CD4-positive, alpha-beta T cell (primary cell): ENCODE measurements at regions of chr16 and their contacts with region 1.

Region 1: DNA sequence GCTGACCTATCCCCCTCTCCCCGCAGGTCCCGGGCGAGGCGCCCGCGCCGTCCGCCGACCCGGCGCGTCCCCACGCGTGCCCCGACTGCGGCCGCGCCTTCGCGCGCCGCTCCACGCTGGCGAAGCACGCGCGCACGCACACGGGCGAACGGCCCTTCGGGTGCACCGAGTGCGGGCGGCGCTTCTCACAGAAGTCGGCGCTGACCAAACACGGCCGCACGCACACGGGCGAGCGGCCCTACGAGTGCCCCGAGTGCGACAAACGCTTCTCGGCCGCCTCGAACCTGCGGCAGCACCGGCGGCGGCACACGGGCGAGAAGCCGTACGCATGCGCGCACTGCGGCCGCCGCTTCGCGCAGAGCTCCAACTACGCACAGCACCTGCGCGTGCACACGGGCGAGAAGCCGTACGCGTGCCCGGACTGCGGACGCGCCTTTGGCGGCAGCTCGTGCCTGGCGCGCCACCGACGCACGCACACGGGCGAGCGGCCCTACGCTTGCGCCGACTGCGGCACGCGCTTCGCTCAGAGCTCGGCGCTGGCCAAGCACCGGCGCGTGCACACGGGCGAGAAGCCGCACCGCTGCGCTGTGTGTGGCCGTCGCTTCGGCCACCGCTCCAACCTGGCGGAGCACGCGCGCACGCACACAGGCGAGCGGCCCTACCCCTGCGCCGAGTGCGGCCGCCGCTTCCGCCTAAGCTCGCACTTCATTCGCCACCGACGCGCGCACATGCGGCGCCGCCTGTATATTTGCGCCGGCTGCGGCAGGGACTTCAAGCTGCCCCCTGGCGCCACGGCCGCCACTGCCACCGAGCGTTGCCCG is 10.3 kb downstream of the ZNF771 start:
- DNase-seq: peak; percentile 77 to 98 (median 88)
- ATAC-seq: peak; percentile 85
- H3K4me3 ChIP-seq: peak overlapping the region; percentile 53
- H3K4me3 Mint-ChIP-seq: peak overlapping the region; percentile 80
- H3K27ac ChIP-seq: peak overlapping the region; percentile 73
- H3K27ac Mint-ChIP-seq: peak overlapping the region; percentile 86
- H3K4me1 ChIP-seq: peaks cover 16% of the 10 kb centered on the region
- H3K4me1 Mint-ChIP-seq: peaks cover 21% of the 10 kb centered on the region
- H3K27me3 ChIP-seq: no peaks in the 10 kb centered on the region
- H3K27me3 Mint-ChIP-seq: no peaks in the 10 kb centered on the region
- CTCF ChIP-seq: no peak

Region 2: DNA sequence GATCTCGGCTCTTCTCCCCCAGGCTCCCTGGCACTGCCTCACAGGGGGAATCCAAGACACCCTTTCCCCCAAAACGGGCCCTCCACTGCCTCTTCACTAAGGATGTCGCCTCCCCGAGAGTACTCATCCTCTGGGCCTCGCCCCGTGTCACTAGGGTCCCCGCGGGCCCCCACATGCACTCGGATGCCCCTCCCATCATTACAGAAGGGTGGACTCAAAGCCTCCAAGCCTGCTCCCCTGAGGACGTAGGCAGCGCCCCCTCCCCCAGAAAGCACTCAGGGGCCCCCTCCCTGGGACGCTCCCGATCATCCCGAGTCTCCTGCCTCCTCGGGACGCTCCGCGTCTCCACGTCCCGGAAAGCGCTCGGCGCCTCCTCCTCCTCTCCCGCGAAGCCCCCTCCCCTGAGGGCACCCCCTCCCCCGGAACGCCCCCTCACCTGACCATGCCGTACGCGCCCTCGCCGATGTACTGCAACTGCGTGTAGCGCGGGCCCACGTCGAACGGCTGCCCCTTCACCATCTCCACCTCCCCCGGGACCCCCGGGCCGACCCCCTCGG is 295.1 kb before region 1 on chr16:
- CTCF ChIA-PET with region 1: no interaction called
- POLR2A ChIA-PET with region 1: no interaction called
- intact Hi-C with region 1: loop called in 1 of 2 experiments (anchors 1 kb)
- DNase-seq: peak in 5 of 14 experiments; percentile 4 to 39 (median 26)
- ATAC-seq: peak; percentile 16
- H3K4me3 ChIP-seq: peak overlapping the region; percentile 92
- H3K4me3 Mint-ChIP-seq: peak overlapping the region; percentile 91
- H3K27ac ChIP-seq: peak overlapping the region; percentile 37 to 59
- H3K27ac Mint-ChIP-seq: peak overlapping the region; percentile 81
- H3K4me1 ChIP-seq: peaks cover 33% of the 10 kb centered on the region
- H3K4me1 Mint-ChIP-seq: peaks cover 28% of the 10 kb centered on the region
- H3K27me3 ChIP-seq: no peaks in the 10 kb centered on the region
- H3K27me3 Mint-ChIP-seq: no peaks in the 10 kb centered on the region
- CTCF ChIP-seq: no peak

Region 3: GRCh38 chr16:30370444-30371247 is 47.1 kb before region 1 on chr16 and contains the start of gene TBC1D10B:
- CTCF ChIA-PET with region 1: interaction called, 6 read pairs
- POLR2A ChIA-PET with region 1: interaction called, 31 read pairs
- intact Hi-C with region 1: no loop called
- DNase-seq: peak; percentile 97 to 100 (median 99)
- ATAC-seq: peak; percentile 84
- H3K4me3 ChIP-seq: peak within 1 kb of the TSS; percentile 77
- H3K4me3 Mint-ChIP-seq: peak within 1 kb of the TSS; percentile 93
- H3K27ac ChIP-seq: peak within 1 kb of the TSS; percentile 59 to 78
- H3K27ac Mint-ChIP-seq: peak within 1 kb of the TSS; percentile 82
- H3K4me1 ChIP-seq: peaks cover 49% of the 10 kb centered on the region
- H3K4me1 Mint-ChIP-seq: peaks cover 51% of the 10 kb centered on the region
- H3K27me3 ChIP-seq: no peaks in the 10 kb centered on the region
- H3K27me3 Mint-ChIP-seq: no peaks in the 10 kb centered on the region
- CTCF ChIP-seq: peak; percentile 27
- total RNA-seq, gene TBC1D10B: 12.7 to 14.7 TPM

Region 4: DNA sequence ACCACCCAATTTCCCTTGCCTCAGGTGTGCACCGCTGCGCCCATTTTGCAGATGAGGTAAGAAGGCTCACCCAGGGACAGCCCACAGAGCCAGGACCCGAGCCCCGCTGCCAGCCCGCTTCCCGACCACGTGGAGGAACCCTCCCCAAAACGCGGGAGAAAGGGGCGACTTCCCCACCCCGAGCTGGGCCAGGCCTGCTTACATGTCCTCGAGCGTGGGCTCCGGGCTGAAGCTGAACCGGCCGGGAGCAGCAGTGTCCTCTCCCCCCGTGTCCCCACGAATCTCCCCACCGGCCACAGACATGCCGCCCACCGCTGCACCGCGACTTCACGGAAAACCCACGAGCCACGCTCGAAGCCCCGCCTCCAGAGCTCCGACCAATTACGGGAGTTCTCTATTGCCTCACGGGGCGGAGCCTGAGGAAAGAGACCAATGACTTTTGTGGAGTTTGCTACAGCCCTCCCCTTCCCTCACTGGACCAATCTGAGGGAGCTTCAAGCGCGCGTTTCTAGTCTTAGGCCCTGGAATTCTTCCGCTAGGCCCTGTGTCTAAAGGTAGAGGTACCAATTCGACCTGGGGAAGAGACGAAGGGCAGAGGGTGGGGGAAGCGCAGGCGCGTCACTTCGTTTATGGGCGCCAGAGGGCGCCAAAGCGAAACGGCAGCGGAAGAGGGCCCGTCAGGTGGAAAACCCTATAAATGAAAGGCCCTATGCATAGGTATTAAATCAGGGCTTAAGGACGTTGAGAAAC is 12.1 kb after region 1 on chr16 and contains the start of gene DCTPP1:
- CTCF ChIA-PET with region 1: interaction called, 13 read pairs
- POLR2A ChIA-PET with region 1: interaction called, 119 read pairs
- intact Hi-C with region 1: no loop called
- DNase-seq: peak; percentile 89 to 99 (median 93)
- ATAC-seq: peak; percentile 96
- H3K4me3 ChIP-seq: peak within 1 kb of the TSS; percentile 97
- H3K4me3 Mint-ChIP-seq: no peak within 1 kb of the TSS
- H3K27ac ChIP-seq: peak within 1 kb of the TSS; percentile 70 to 81
- H3K27ac Mint-ChIP-seq: no peak within 1 kb of the TSS
- H3K4me1 ChIP-seq: peaks cover 38% of the 10 kb centered on the region
- H3K4me1 Mint-ChIP-seq: peaks cover 21% of the 10 kb centered on the region
- H3K27me3 ChIP-seq: no peaks in the 10 kb centered on the region
- H3K27me3 Mint-ChIP-seq: no peaks in the 10 kb centered on the region
- CTCF ChIP-seq: peak; percentile 75
- total RNA-seq, gene DCTPP1: 5.4 to 6.5 TPM

Region 5: GRCh38 chr16:30534368-30535105 is 116.8 kb after region 1 on chr16 and contains the start of gene ZNF747:
- CTCF ChIA-PET with region 1: interaction called, 3 read pairs
- POLR2A ChIA-PET with region 1: interaction called, 25 read pairs
- intact Hi-C with region 1: no loop called
- DNase-seq: peak; percentile 88 to 95 (median 92)
- ATAC-seq: peak; percentile 80
- H3K4me3 ChIP-seq: peak within 1 kb of the TSS; percentile 87
- H3K4me3 Mint-ChIP-seq: peak within 1 kb of the TSS; percentile 94
- H3K27ac ChIP-seq: peak within 1 kb of the TSS; percentile 85 to 96
- H3K27ac Mint-ChIP-seq: peak within 1 kb of the TSS; percentile 99
- H3K4me1 ChIP-seq: peaks cover 52% of the 10 kb centered on the region
- H3K4me1 Mint-ChIP-seq: peaks cover 43% of the 10 kb centered on the region
- H3K27me3 ChIP-seq: no peaks in the 10 kb centered on the region
- H3K27me3 Mint-ChIP-seq: no peaks in the 10 kb centered on the region
- CTCF ChIP-seq: no peak
- total RNA-seq, gene ZNF747: 6.3 to 6.7 TPM

Region 6: DNA sequence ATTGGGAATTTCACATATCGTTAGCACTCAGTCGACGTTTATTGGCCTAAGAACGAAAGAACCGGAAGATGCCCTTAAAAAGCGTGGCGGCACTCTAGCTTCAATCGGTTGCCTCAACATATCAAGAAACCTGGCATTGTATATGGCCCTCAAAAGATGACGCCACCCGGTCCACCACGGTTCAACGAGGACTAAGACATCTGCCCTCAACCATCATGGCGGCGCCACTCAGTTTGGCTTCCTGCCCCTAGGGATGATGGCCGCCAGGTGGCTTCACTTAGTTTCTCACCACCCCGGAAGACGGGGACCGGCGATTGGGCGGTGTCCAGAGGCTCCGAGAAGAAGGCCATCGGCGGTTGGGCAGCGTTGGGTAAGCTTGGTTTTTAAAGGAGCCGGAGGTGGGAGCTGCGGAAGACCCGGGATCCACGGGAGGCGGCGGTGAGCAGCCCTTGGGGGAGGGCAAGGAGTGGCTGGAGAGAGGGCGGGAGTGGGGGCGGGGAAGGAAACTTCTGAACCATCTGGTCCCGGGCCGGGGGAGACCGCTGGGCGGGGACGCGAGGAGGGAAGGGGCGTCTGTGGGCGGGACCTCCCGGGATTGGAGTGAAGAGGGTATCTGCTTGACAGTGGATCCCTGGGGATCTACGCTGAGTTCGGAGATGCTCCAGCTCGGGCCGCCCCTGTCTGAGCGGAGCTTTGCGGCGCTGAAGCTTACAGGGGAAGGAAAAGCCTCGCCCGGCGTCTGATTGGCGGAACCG is 232.8 kb after region 1 on chr16 and contains the start of gene PRR14:
- CTCF ChIA-PET with region 1: no interaction called
- POLR2A ChIA-PET with region 1: interaction called, 16 read pairs
- intact Hi-C with region 1: no loop called
- DNase-seq: peak; percentile 96 to 99 (median 98)
- ATAC-seq: peak; percentile 89
- H3K4me3 ChIP-seq: peak within 1 kb of the TSS; percentile 86
- H3K4me3 Mint-ChIP-seq: peak within 1 kb of the TSS; percentile 99
- H3K27ac ChIP-seq: peak within 1 kb of the TSS; percentile 84 to 96
- H3K27ac Mint-ChIP-seq: peak within 1 kb of the TSS; percentile 95
- H3K4me1 ChIP-seq: peaks cover 30% of the 10 kb centered on the region
- H3K4me1 Mint-ChIP-seq: peaks cover 22% of the 10 kb centered on the region
- H3K27me3 ChIP-seq: no peaks in the 10 kb centered on the region
- H3K27me3 Mint-ChIP-seq: no peaks in the 10 kb centered on the region
- CTCF ChIP-seq: no peak
- total RNA-seq, gene PRR14: 50.2 to 51.7 TPM